ENCODE measurements at regions of chr2 and their contacts with region 1.

Region 1: GRCh38 chr2:219521066-219521880 is 7.0 kb downstream of the ASIC4 start:
- DNase-seq: no peak
- ATAC-seq: peak; percentile 6 to 55 (median 40)
- H3K4me3 ChIP-seq: no peak overlapping the region
- H3K27ac ChIP-seq: no peak overlapping the region
- H3K4me1 ChIP-seq: no peaks in the 10 kb centered on the region
- H3K27me3 ChIP-seq: peaks cover 0 to 23% of the 10 kb centered on the region in 2 donors
- CTCF ChIP-seq: peak in 3 of 4 donors; percentile 17 to 35 (median 26)
- POLR2A ChIP-seq: no peak

Region 2: GRCh38 chr2:219402665-219403515 is 118.4 kb before region 1 on chr2:
- intact Hi-C with region 1: loop called in 1 of 2 experiments (anchors 10 kb)
- DNase-seq: peak in 2 of 3 donors; percentile 62
- ATAC-seq: peak; percentile 80 to 83 (median 81)
- H3K4me3 ChIP-seq: no peak overlapping the region
- H3K27ac ChIP-seq: no peak overlapping the region
- H3K4me1 ChIP-seq: peaks cover 0 to 15% (median 0%) of the 10 kb centered on the region in 4 donors
- H3K27me3 ChIP-seq: no peaks in the 10 kb centered on the region
- CTCF ChIP-seq: peak; percentile 76 to 88 (median 86)
- POLR2A ChIP-seq: no peak

Region 3: GRCh38 chr2:219664944-219665343 is 143.7 kb after region 1 on chr2:
- intact Hi-C with region 1: no loop called
- DNase-seq: no peak
- ATAC-seq: no peak
- H3K4me3 ChIP-seq: no peak overlapping the region
- H3K27ac ChIP-seq: no peak overlapping the region
- H3K4me1 ChIP-seq: no peaks in the 10 kb centered on the region
- H3K27me3 ChIP-seq: no peaks in the 10 kb centered on the region
- CTCF ChIP-seq: no peak
- POLR2A ChIP-seq: no peak

Region 4: GRCh38 chr2:219789476-219789875 is 268.2 kb after region 1 on chr2:
- intact Hi-C with region 1: no loop called
- DNase-seq: no peak
- ATAC-seq: no peak
- H3K4me3 ChIP-seq: no peak overlapping the region
- H3K27ac ChIP-seq: no peak overlapping the region
- H3K4me1 ChIP-seq: no peaks in the 10 kb centered on the region
- H3K27me3 ChIP-seq: no peaks in the 10 kb centered on the region
- CTCF ChIP-seq: no peak
- POLR2A ChIP-seq: no peak

Measured in right lobe of liver (tissue), 6 donors.